Colonic mucosa (tissue), 4 donors: ENCODE measurements at regions of chr3 and their contacts with region 1.

Region 1: DNA sequence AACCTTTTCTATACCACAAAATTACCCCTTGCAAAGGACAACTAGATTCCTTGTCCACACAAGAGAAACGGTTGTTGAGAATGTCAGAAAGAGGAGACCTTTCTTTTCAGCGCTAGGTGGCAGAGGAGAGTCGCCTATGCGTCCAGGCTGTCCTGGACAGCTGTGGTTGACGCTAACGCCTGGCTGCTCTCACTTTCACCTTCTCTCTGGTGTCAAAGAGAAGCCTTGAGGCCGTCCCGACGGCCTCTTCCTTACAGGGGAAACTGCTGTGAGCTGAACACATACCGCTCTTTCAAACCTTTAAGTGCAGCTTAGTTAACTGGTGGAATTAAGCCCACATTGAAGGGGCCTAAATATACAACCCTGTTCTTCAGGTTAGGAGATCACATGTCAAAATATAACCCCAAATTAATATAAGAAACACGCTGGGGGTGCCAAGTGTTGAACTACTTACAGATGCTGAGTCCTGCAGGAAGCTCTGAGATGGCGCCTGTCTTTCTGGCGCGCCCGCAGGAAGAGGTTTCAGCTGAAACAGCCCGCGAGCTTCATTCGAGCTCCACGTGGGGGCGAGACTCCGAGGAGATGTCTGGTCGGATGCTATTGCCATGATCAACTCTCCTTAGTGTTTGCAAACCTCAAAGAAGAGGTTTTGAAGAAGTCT is 26.1 kb upstream of the KBTBD8 start:
- DNase-seq: peak; percentile 83
- H3K4me3 ChIP-seq: peak overlapping the region; percentile 16
- H3K27ac ChIP-seq: peak overlapping the region; percentile 1
- H3K4me1 ChIP-seq: no peaks in the 10 kb centered on the region
- H3K27me3 ChIP-seq: no peaks in the 10 kb centered on the region
- CTCF ChIP-seq: peak; percentile 89

Region 2: GRCh38 chr3:66773257-66773656 is 198.8 kb before region 1 on chr3:
- intact Hi-C with region 1: no loop called
- DNase-seq: no peak
- H3K4me3 ChIP-seq: no peak overlapping the region
- H3K27ac ChIP-seq: no peak overlapping the region
- H3K4me1 ChIP-seq: no peaks in the 10 kb centered on the region
- H3K27me3 ChIP-seq: no peaks in the 10 kb centered on the region
- CTCF ChIP-seq: no peak

Region 3: DNA sequence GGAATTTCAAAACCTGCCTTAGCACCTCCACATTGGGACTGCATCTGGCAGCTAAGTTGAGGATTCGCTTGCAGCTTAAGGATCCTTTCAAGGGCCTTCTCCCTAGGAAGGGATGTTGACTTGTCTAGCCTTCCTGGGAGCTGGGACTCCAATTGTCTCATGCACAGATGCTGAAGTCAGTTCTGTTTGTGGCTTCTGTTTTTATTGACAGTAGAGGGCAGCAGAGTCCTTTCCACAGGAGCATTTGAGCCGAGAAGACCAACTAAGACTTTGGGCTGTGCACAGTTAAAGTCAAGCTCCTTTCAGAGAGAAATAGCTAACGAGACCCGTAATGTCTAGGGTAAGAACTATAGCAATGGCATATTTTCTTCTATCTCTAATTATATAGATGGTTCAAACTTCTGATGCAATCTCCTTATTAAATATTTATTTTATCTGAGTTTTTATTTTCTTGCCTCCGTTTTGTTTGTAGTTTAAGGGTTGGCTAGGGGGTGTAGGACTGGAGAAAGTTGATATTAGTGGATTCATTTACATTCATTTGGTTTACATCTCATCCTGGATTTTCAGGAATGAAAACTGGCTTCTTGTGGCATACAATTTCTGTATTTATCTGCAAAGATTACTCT is 33.6 kb before region 1 on chr3:
- intact Hi-C with region 1: loop called (anchors 2 kb)
- DNase-seq: peak; percentile 58
- H3K4me3 ChIP-seq: no peak overlapping the region
- H3K27ac ChIP-seq: no peak overlapping the region
- H3K4me1 ChIP-seq: no peaks in the 10 kb centered on the region
- H3K27me3 ChIP-seq: no peaks in the 10 kb centered on the region
- CTCF ChIP-seq: peak; percentile 70

Region 4: GRCh38 chr3:67037615-67038014 is 65.6 kb after region 1 on chr3:
- intact Hi-C with region 1: loop called (anchors 10 kb)
- DNase-seq: no peak
- H3K4me3 ChIP-seq: no peak overlapping the region
- H3K27ac ChIP-seq: no peak overlapping the region
- H3K4me1 ChIP-seq: no peaks in the 10 kb centered on the region
- H3K27me3 ChIP-seq: no peaks in the 10 kb centered on the region
- CTCF ChIP-seq: no peak